MCF 10A (cell line): ENCODE measurements at regions of chr10 and their contacts with region 1.

Region 1: GRCh38 chr10:95374597-95375209 is 83.9 kb upstream of the PDLIM1 start:
- DNase-seq: peak; percentile 88
- H3K4me3 Mint-ChIP-seq: no peak overlapping the region
- H3K27ac Mint-ChIP-seq: no peak overlapping the region
- H3K4me1 Mint-ChIP-seq: no peaks in the 10 kb centered on the region
- H3K27me3 Mint-ChIP-seq: peaks cover 29% of the 10 kb centered on the region
- CTCF ChIP-seq: peak; percentile 95

Region 2: GRCh38 chr10:95363303-95363912 is 11.3 kb before region 1 on chr10:
- CTCF ChIA-PET with region 1: interaction called, 120 read pairs
- POLR2A ChIA-PET with region 1: no interaction called
- intact Hi-C with region 1: no loop called
- DNase-seq: peak; percentile 84
- H3K4me3 Mint-ChIP-seq: no peak overlapping the region
- H3K27ac Mint-ChIP-seq: no peak overlapping the region
- H3K4me1 Mint-ChIP-seq: peaks cover 16% of the 10 kb centered on the region
- H3K27me3 Mint-ChIP-seq: peaks cover 18% of the 10 kb centered on the region
- CTCF ChIP-seq: peak; percentile 86

Region 3: GRCh38 chr10:95406651-95407280 is 32.1 kb after region 1 on chr10:
- CTCF ChIA-PET with region 1: interaction called, 68 read pairs
- POLR2A ChIA-PET with region 1: no interaction called
- intact Hi-C with region 1: no loop called
- DNase-seq: peak; percentile 88
- H3K4me3 Mint-ChIP-seq: no peak overlapping the region
- H3K27ac Mint-ChIP-seq: no peak overlapping the region
- H3K4me1 Mint-ChIP-seq: peaks cover 10% of the 10 kb centered on the region
- H3K27me3 Mint-ChIP-seq: no peaks in the 10 kb centered on the region
- CTCF ChIP-seq: no peak

Region 4: GRCh38 chr10:95440756-95441546 is 66.2 kb after region 1 on chr10:
- CTCF ChIA-PET with region 1: interaction called, 47 read pairs
- POLR2A ChIA-PET with region 1: no interaction called
- intact Hi-C with region 1: no loop called
- DNase-seq: no peak
- H3K4me3 Mint-ChIP-seq: no peak overlapping the region
- H3K27ac Mint-ChIP-seq: no peak overlapping the region
- H3K4me1 Mint-ChIP-seq: peaks cover 12% of the 10 kb centered on the region
- H3K27me3 Mint-ChIP-seq: no peaks in the 10 kb centered on the region
- CTCF ChIP-seq: no peak

Region 5: DNA sequence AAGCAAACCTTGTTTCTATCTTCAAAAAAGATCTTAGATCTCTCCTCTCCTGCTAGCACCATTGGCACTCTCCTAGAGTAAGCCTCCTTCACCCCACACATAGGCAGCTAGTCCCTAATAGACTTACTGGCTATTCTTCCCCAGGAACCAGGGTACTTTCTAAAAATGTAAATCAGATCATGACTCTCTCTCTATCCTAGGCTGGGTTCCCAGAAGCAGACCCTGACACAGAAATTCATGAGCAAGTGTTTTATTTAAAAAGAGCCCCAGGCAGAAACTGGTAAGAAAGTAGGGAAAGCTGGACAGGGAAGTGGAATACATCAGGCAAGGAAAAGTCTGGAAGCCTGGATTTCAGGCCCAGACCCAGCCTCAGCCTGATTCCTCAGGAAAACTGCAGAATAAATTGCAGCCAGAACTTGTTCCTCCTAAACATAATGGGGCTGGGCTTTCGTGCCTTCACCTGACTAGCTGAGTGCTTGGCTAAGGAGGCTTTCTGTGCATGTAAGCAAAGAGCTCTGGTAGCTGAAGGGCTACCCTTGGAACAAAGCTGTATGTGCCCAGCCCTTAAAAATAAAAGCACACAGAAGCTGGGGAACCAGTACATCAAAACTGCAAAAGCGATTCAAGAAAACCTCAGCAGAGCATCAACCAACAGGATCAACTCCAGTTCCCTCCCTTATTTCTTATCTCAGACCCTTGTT is 205.3 kb after region 1 on chr10:
- CTCF ChIA-PET with region 1: interaction called, 29 read pairs
- POLR2A ChIA-PET with region 1: no interaction called
- intact Hi-C with region 1: no loop called
- DNase-seq: no peak
- H3K4me3 Mint-ChIP-seq: no peak overlapping the region
- H3K27ac Mint-ChIP-seq: no peak overlapping the region
- H3K4me1 Mint-ChIP-seq: peaks cover 6% of the 10 kb centered on the region
- H3K27me3 Mint-ChIP-seq: peaks cover 51% of the 10 kb centered on the region
- CTCF ChIP-seq: no peak

Region 6: GRCh38 chr10:95626500-95626899 is 251.8 kb after region 1 on chr10:
- CTCF ChIA-PET with region 1: interaction called, 16 read pairs
- POLR2A ChIA-PET with region 1: no interaction called
- intact Hi-C with region 1: no loop called
- DNase-seq: no peak
- H3K4me3 Mint-ChIP-seq: no peak overlapping the region
- H3K27ac Mint-ChIP-seq: no peak overlapping the region
- H3K4me1 Mint-ChIP-seq: no peaks in the 10 kb centered on the region
- H3K27me3 Mint-ChIP-seq: no peaks in the 10 kb centered on the region
- CTCF ChIP-seq: no peak

Region 7: GRCh38 chr10:95841661-95842498 is 467.2 kb after region 1 on chr10:
- CTCF ChIA-PET with region 1: interaction called, 3 read pairs
- POLR2A ChIA-PET with region 1: no interaction called
- intact Hi-C with region 1: loop called (anchors 1 kb)
- DNase-seq: peak; percentile 77
- H3K4me3 Mint-ChIP-seq: no peak overlapping the region
- H3K27ac Mint-ChIP-seq: no peak overlapping the region
- H3K4me1 Mint-ChIP-seq: no peaks in the 10 kb centered on the region
- H3K27me3 Mint-ChIP-seq: peaks cover 15% of the 10 kb centered on the region
- CTCF ChIP-seq: peak; percentile 46